ENCODE measurements at regions of chr6 and their contacts with region 1.

Region 1: GRCh38 chr6:116969211-116969863 is 92.3 kb downstream of the RFX6 start:
- DNase-seq: peak; percentile 64
- ATAC-seq: peak; percentile 89
- H3K4me3 ChIP-seq: no peak overlapping the region
- H3K27ac ChIP-seq: no peak overlapping the region
- H3K4me1 ChIP-seq: no peaks in the 10 kb centered on the region
- H3K27me3 ChIP-seq: no peaks in the 10 kb centered on the region
- CTCF ChIP-seq: peak; percentile 84
- EP300 ChIP-seq: no peak
- POLR2A ChIP-seq: no peak
- RAD21 ChIP-seq: peak; percentile 61

Region 2: GRCh38 chr6:116034327-116034726 is 935.0 kb before region 1 on chr6:
- CTCF ChIA-PET with region 1: no interaction called
- POLR2A ChIA-PET with region 1: no interaction called
- in situ Hi-C with region 1: no loop called
- intact Hi-C with region 1: no loop called
- DNase-seq: no peak
- ATAC-seq: no peak
- H3K4me3 ChIP-seq: no peak overlapping the region
- H3K27ac ChIP-seq: peak overlapping the region; percentile 35
- H3K4me1 ChIP-seq: peaks cover 24% of the 10 kb centered on the region
- H3K27me3 ChIP-seq: no peaks in the 10 kb centered on the region
- CTCF ChIP-seq: no peak
- EP300 ChIP-seq: no peak
- POLR2A ChIP-seq: no peak
- RAD21 ChIP-seq: no peak

Region 3: DNA sequence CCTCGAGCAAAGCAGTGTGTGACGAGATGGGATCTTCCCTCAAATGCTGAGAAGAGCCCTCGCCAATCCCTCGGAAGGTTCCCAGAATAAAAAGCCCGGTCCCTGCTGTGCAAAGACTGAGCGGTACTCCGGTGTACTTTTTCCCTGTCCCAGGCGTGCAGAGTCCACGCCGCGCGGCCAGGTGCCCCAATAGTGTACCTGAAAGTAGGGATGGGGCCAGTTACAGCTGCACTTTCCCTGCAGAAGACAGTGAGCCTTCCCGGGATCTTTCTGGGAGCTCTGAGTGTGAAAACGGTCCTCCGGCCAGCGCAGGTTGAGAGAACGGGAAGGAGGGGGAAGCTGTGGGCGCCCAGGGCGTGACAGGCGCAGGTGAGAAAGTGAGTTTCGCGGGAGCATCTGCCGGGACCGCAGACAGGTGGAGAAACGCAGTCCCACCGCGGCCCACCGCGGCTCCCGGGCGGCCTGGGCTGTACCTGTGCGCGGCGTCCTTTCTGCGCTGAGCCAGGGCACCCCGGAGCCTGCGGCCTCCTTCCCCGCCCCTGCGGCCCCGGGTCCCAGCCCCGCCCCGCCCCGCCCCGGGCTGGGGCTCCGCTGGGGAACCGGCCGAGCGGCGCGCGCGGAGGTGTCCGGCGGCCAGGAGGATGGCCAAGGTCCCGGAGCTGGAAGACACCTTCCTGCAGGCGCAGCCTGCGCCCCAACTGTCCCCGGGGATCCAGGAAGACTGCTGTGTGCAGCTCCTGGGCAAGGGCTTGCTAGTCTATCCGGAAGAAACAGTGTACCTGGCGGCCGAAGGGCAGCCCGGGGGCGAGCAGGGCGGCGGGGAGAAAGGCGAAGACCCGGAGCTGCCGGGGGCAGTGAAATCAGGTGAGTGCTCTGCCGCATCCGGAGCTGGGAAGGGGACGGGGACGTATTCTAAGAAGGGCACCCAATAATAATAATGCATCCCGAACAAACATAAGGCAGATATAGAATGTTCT is 92.4 kb before region 1 on chr6 and contains the start of gene RFX6:
- CTCF ChIA-PET with region 1: interaction called, 19 read pairs
- POLR2A ChIA-PET with region 1: no interaction called
- in situ Hi-C with region 1: loop called (anchors 5 kb)
- intact Hi-C with region 1: loop called (anchors 1 kb)
- DNase-seq: no peak
- ATAC-seq: peak; percentile 95
- H3K4me3 ChIP-seq: peak within 1 kb of the TSS; percentile 40 to 68 (median 52); a peak in 4 of 6 replicates
- H3K27ac ChIP-seq: no peak within 1 kb of the TSS
- H3K4me1 ChIP-seq: peaks cover 13% of the 10 kb centered on the region
- H3K27me3 ChIP-seq: peaks cover 15 to 32% of the 10 kb centered on the region in 2 experiments
- CTCF ChIP-seq: no peak
- EP300 ChIP-seq: no peak
- POLR2A ChIP-seq: no peak
- RAD21 ChIP-seq: no peak
- total RNA-seq, gene RFX6: not detected in 2 replicates

Region 4: GRCh38 chr6:116996842-116997241 is 27.5 kb after region 1 on chr6:
- CTCF ChIA-PET with region 1: no interaction called
- POLR2A ChIA-PET with region 1: no interaction called
- in situ Hi-C with region 1: no loop called
- intact Hi-C with region 1: no loop called
- DNase-seq: no peak
- ATAC-seq: no peak
- H3K4me3 ChIP-seq: no peak overlapping the region
- H3K27ac ChIP-seq: no peak overlapping the region
- H3K4me1 ChIP-seq: no peaks in the 10 kb centered on the region
- H3K27me3 ChIP-seq: no peaks in the 10 kb centered on the region
- CTCF ChIP-seq: no peak
- EP300 ChIP-seq: no peak
- POLR2A ChIP-seq: no peak
- RAD21 ChIP-seq: no peak

Region 5: GRCh38 chr6:117188627-117189201 is 219.4 kb after region 1 on chr6:
- CTCF ChIA-PET with region 1: interaction called, 10 read pairs
- POLR2A ChIA-PET with region 1: no interaction called
- in situ Hi-C with region 1: no loop called
- intact Hi-C with region 1: loop called (anchors 1 kb)
- DNase-seq: no peak
- ATAC-seq: no peak
- H3K4me3 ChIP-seq: no peak overlapping the region
- H3K27ac ChIP-seq: no peak overlapping the region
- H3K4me1 ChIP-seq: no peaks in the 10 kb centered on the region
- H3K27me3 ChIP-seq: no peaks in the 10 kb centered on the region
- CTCF ChIP-seq: peak; percentile 38; the same call in 1 of the 2 replicates
- EP300 ChIP-seq: no peak
- POLR2A ChIP-seq: no peak
- RAD21 ChIP-seq: no peak

Region 6: DNA sequence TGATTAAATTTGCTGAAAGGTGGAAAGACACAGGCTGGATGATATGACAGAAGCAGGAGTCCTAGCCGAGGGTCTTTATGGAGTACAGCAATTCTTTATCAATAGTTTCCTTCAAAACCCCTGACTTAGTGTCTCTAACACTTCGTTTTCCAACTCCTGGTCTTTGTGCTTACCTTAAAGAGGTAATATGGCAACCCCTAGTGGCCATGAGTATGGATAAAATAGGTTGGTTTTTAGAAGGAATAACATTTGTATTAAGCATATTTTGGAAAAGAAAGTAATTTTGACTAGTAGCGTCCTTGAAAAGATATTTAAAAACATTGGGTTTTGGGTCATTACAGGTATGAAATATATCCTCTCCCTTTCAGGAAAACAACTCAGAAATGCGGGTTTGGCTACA is 347.9 kb after region 1 on chr6:
- CTCF ChIA-PET with region 1: interaction called, 7 read pairs
- POLR2A ChIA-PET with region 1: no interaction called
- in situ Hi-C with region 1: loop called (anchors 10 kb)
- intact Hi-C with region 1: loop called (anchors 1 kb)
- DNase-seq: peak; percentile 39
- ATAC-seq: peak; percentile 78
- H3K4me3 ChIP-seq: no peak overlapping the region
- H3K27ac ChIP-seq: no peak overlapping the region
- H3K4me1 ChIP-seq: no peaks in the 10 kb centered on the region
- H3K27me3 ChIP-seq: peaks cover 0 to 6% of the 10 kb centered on the region in 2 experiments; a peak in 1 of 5 replicates
- CTCF ChIP-seq: peak; percentile 59
- EP300 ChIP-seq: no peak
- POLR2A ChIP-seq: no peak
- RAD21 ChIP-seq: peak; percentile 15; the same call in 1 of the 2 replicates

Measured in HepG2 (cell line).